ENCODE measurements at regions of chr5 and their contacts with region 1.

Region 1: DNA sequence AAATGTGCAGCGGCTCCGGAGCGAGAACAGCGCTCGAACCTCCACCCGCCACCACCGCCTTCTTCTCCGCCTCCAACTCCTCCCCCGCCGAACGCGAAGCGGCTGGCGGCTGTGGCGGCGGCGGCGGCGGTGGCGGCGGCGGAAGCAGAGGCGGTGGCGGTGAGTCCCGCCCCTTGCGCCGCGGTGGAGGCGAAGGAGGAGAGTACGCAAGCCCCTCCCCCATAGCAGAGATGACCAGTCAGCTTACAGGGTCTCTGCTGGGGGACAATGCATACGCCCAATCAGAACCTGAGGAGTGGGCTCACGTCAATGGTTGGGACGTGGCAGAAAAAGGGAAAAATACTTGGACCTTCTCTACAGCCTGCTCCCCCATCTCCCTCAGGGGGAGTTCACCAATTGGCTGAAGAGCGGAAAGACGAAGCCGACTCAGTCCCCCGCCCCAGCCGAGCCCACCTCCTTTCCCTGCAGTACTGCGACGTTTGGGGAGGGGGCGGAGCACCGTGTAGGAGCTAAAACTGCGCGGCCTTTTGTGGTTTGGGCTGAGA is at the start of gene PJA2:
- DNase-seq: peak; percentile 96
- H3K4me3 Mint-ChIP-seq: peak within 1 kb of the TSS; percentile 92
- H3K27ac Mint-ChIP-seq: peak within 1 kb of the TSS; percentile 97
- H3K4me1 Mint-ChIP-seq: peaks cover 57% of the 10 kb centered on the region
- H3K27me3 Mint-ChIP-seq: no peaks in the 10 kb centered on the region
- total RNA-seq, gene PJA2: 40.2 and 41.4 TPM in 2 replicates

Region 2: GRCh38 chr5:108381954-108382783 is 1027.7 kb before region 1 on chr5 and contains the start of gene FBXL17:
- intact Hi-C with region 1: loop called (anchors 1 kb)
- DNase-seq: peak; percentile 89
- H3K4me3 Mint-ChIP-seq: peak within 1 kb of the TSS; percentile 83
- H3K27ac Mint-ChIP-seq: peak within 1 kb of the TSS; percentile 84
- H3K4me1 Mint-ChIP-seq: peaks cover 34% of the 10 kb centered on the region
- H3K27me3 Mint-ChIP-seq: peaks cover 1% of the 10 kb centered on the region
- total RNA-seq, gene FBXL17: 8.2 and 12.2 TPM in 2 replicates

Region 3: DNA sequence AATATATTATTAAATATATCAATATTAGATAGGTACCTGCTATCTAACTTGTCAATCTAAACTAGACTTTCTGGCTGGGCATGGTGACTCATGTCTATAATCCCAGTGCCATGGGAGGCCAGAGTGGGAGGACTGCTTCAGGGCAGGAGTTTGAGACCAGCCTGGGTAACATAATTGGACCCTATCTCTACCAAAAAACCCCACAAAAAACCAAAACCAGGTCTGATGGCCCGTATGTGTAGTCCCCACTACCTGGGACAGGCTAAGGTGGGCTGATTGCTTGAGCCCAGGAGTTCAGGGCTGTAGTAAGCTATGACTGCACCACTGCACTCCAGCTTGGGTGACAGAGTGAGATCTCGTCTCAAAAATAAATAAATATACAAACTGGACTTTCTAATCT is 55.2 kb before region 1 on chr5:
- intact Hi-C with region 1: loop called (anchors 5 kb)
- DNase-seq: no peak
- H3K4me3 Mint-ChIP-seq: no peak overlapping the region
- H3K27ac Mint-ChIP-seq: no peak overlapping the region
- H3K4me1 Mint-ChIP-seq: no peaks in the 10 kb centered on the region
- H3K27me3 Mint-ChIP-seq: no peaks in the 10 kb centered on the region

Region 4: DNA sequence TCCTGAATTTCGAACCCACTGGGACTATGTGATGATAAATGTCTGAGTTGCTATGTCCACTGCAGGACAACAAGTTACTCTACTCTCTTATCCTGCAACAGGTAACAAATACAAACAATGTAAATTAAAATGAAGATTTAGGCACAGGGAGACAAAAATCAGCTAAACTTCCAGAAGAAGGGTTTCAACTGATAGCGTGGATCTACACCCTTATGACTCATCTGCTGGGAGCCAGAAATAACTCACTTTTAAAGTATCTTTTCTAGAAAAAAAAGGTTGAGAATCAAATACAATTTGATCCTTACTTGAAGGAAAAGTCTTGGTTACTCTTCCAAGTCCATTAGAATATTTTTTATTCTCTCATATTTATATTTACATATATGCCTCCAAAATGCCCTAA is 21.5 kb before region 1 on chr5:
- intact Hi-C with region 1: no loop called
- DNase-seq: no peak
- H3K4me3 Mint-ChIP-seq: no peak overlapping the region
- H3K27ac Mint-ChIP-seq: no peak overlapping the region
- H3K4me1 Mint-ChIP-seq: peaks cover 31% of the 10 kb centered on the region
- H3K27me3 Mint-ChIP-seq: no peaks in the 10 kb centered on the region

Region 5: DNA sequence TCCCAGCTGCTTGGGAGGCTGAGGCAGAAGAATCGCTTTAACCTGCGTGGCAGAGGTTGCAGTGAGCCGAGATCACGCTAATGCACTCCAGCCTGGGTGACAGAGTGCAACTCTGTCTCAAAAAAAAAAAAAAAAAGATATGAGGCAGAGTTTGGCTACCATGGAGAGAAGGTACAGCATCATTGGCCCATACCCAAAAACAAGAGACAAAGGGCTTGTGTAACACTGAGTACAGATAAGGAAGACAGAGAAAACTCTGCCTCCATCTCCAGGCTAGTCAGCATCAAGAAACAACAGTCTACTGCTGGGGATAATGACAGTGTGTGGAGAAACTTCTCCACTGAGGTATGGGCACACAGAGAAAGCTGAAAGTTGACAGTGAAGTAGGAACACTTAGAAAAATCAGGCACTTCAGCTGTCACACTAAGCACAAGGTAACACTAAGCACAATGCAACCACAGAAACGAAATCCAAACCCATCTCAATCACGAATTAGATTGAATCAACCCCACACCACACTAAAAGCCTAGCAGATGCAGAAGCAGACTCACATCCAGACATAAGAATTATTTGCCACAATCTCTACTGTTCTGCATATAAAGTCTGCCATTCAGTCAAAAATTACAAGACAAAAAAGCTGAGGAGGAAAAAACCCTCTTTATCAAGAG is 10.7 kb before region 1 on chr5:
- intact Hi-C with region 1: no loop called
- DNase-seq: no peak
- H3K4me3 Mint-ChIP-seq: no peak overlapping the region
- H3K27ac Mint-ChIP-seq: no peak overlapping the region
- H3K4me1 Mint-ChIP-seq: peaks cover 24% of the 10 kb centered on the region
- H3K27me3 Mint-ChIP-seq: no peaks in the 10 kb centered on the region

Region 6: GRCh38 chr5:109455598-109456096 is 45.7 kb after region 1 on chr5:
- intact Hi-C with region 1: loop called (anchors 1 kb)
- DNase-seq: no peak
- H3K4me3 Mint-ChIP-seq: no peak overlapping the region
- H3K27ac Mint-ChIP-seq: peak overlapping the region; percentile 53
- H3K4me1 Mint-ChIP-seq: peaks cover 7% of the 10 kb centered on the region
- H3K27me3 Mint-ChIP-seq: peaks cover 4% of the 10 kb centered on the region

Region 7: DNA sequence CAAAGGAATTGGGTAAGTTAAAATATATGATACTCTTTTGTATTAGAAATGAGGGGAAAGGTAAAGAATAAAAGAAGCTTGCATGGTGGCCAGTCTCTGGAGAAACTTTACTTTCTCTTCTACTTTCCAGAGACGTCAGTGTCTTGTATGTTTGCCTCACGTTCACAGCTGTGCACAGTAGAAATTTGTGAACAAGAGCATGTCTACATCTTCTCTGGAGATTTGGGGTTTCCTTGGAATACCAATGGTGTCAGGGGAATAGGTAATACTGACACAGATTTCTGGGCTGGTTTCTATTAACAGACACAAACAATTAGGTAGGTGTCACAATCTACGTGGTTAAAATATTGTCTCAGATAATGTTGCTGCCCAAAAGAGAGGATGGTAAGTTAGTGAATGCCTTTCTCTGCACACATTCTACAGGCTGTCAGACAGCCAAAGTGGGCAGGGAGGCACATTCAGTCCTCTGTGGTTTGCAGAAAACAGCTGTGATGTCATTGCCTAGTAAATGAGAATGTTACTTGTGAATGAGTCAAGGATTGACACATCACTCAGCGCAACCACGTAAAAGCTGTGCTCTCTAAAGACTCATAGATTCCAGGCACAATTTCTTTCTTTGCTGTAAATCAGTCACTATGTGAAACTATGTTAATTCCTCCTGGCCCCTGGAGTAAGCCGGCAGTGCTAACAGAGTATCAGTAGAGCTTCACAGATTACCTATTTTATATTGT is 676.9 kb after region 1 on chr5:
- intact Hi-C with region 1: loop called (anchors 1 kb)
- DNase-seq: peak; percentile 43
- H3K4me3 Mint-ChIP-seq: peak overlapping the region; percentile 53
- H3K27ac Mint-ChIP-seq: peak overlapping the region; percentile 87
- H3K4me1 Mint-ChIP-seq: peaks cover 45% of the 10 kb centered on the region
- H3K27me3 Mint-ChIP-seq: no peaks in the 10 kb centered on the region

Region 8: GRCh38 chr5:111092062-111092853 is 1682.3 kb after region 1 on chr5 and contains the start of gene WDR36:
- intact Hi-C with region 1: loop called (anchors 2 kb)
- DNase-seq: peak; percentile 83
- H3K4me3 Mint-ChIP-seq: peak within 1 kb of the TSS; percentile 98
- H3K27ac Mint-ChIP-seq: peak within 1 kb of the TSS; percentile 97
- H3K4me1 Mint-ChIP-seq: peaks cover 42% of the 10 kb centered on the region
- H3K27me3 Mint-ChIP-seq: peaks cover 2% of the 10 kb centered on the region
- total RNA-seq, gene WDR36: 82.5 and 85.7 TPM in 2 replicates

Measured in activated T-helper 1 cell treated with anti-CD3 and anti-CD28 coated beads, Interleukin-12 subunit alpha, Interleukin-12 subunit beta, Interleukin-2, Interleukin-4 antibody, amounts not matched to agents 30 ng/mL and 10 ng/mL and 1 ng/mL, durations not matched to agents 14 hours and 24 hours and 36 hours (primary cell).